ENCODE measurements at regions of chr9 and their contacts with region 1.

Region 1: DNA sequence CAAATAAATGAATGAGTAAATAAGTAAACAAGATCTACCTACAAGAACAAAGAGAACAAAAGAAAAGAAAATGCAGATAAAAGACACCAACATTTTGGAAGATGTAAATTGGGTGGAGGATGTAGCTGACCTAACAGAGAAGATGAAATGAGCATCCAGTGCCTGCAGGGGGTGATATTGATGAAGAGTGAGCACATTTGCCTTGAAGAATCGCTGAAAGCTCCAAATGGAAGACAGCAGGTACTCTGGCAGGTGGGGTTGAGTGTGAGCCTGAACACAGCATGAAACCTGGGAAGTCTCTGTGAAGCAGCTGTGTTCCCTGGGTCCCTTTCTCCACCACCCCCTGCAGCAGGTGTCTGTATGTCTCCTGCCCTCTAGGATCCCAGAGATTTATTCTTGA is 125.6 kb downstream of the NXNL2 start:
- DNase-seq: no peak
- H3K4me3 Mint-ChIP-seq: no peak overlapping the region
- H3K27ac Mint-ChIP-seq: no peak overlapping the region
- H3K4me1 Mint-ChIP-seq: no peaks in the 10 kb centered on the region
- H3K27me3 Mint-ChIP-seq: peaks cover 3% of the 10 kb centered on the region

Region 2: DNA sequence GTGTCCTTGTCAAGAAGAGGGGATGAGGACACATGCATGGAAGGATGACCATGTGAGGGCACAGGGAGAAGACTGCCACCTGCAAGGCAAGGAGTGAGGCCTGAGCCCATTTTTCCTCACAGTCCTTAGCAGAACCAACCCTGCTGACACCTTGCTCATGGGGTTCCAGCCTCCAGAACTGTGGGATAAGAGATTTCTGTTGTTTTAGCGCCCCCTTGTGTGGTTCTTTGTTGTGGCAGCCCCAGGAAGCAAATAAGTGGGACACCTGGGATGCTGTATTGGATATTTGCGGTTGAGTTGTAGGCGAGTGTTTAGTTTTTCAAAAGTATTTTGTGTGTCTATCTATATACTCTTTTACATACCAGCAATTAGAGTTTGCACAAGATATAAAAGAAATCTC is 80.7 kb after region 1 on chr9:
- CTCF ChIA-PET with region 1: no interaction called
- POLR2A ChIA-PET with region 1: no interaction called
- intact Hi-C with region 1: loop called (anchors 2 kb)
- DNase-seq: peak; percentile 35
- H3K4me3 Mint-ChIP-seq: no peak overlapping the region
- H3K27ac Mint-ChIP-seq: no peak overlapping the region
- H3K4me1 Mint-ChIP-seq: no peaks in the 10 kb centered on the region
- H3K27me3 Mint-ChIP-seq: peaks cover 19% of the 10 kb centered on the region

Region 3: DNA sequence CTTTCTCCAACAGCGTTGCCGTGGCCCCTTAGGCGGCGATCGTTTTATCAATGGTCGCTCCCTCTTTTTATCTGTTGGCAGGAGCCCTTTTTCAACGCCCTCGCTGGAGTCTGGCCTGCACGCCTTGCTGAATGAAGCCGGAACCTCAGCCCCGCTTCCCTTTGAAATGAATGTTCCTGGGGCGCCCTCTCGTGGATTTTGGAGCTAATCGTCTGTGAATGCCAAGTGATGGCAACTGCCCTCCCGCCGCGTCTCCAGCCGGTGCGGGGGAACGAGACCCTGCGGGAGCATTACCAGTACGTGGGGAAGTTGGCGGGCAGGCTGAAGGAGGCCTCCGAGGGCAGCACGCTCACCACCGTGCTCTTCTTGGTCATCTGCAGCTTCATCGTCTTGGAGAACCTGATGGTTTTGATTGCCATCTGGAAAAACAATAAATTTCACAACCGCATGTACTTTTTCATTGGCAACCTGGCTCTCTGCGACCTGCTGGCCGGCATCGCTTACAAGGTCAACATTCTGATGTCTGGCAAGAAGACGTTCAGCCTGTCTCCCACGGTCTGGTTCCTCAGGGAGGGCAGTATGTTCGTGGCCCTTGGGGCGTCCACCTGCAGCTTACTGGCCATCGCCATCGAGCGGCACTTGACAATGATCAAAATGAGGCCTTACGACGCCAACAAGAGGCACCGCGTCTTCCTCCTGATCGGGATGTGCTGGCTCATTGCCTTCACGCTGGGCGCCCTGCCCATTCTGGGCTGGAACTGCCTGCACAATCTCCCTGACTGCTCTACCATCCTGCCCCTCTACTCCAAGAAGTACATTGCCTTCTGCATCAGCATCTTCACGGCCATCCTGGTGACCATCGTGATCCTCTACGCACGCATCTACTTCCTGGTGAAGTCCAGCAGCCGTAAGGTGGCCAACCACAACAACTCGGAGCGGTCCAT is 340.6 kb after region 1 on chr9:
- CTCF ChIA-PET with region 1: interaction called, 6 read pairs
- POLR2A ChIA-PET with region 1: no interaction called
- intact Hi-C with region 1: loop called (anchors 2 kb)
- DNase-seq: peak; percentile 86
- H3K4me3 Mint-ChIP-seq: no peak overlapping the region
- H3K27ac Mint-ChIP-seq: no peak overlapping the region
- H3K4me1 Mint-ChIP-seq: peaks cover 2% of the 10 kb centered on the region
- H3K27me3 Mint-ChIP-seq: peaks cover 14% of the 10 kb centered on the region

Measured in activated CD4-positive, alpha-beta memory T cell treated with anti-CD3 and anti-CD28 coated beads for 36 hours (primary cell).